B cell (primary cell): ENCODE measurements at regions of chr1 and their contacts with region 1.

Region 1: GRCh38 chr1:1858382-1859086 is 32.4 kb downstream of the GNB1 start:
- DNase-seq: peak; percentile 52
- ATAC-seq: no peak
- H3K4me3 ChIP-seq: no peak overlapping the region
- H3K4me3 Mint-ChIP-seq: peak overlapping the region; percentile 41
- H3K27ac ChIP-seq: peak overlapping the region; percentile 4 to 74
- H3K27ac Mint-ChIP-seq: peak overlapping the region; percentile 48
- H3K4me1 ChIP-seq: peaks cover 72 to 84% of the 10 kb centered on the region in 2 donors
- H3K4me1 Mint-ChIP-seq: peaks cover 79% of the 10 kb centered on the region
- H3K27me3 ChIP-seq: no peaks in the 10 kb centered on the region
- H3K27me3 Mint-ChIP-seq: no peaks in the 10 kb centered on the region
- CTCF ChIP-seq: no peak

Region 2: GRCh38 chr1:1796466-1796865 is 62.1 kb before region 1 on chr1:
- CTCF ChIA-PET with region 1: no interaction called
- POLR2A ChIA-PET with region 1: no interaction called
- intact Hi-C with region 1: no loop called
- DNase-seq: peak; percentile 40
- ATAC-seq: no peak
- H3K4me3 ChIP-seq: no peak overlapping the region
- H3K4me3 Mint-ChIP-seq: no peak overlapping the region
- H3K27ac ChIP-seq: peak overlapping the region in 1 of 2 donors; percentile 48
- H3K27ac Mint-ChIP-seq: peak overlapping the region; percentile 77
- H3K4me1 ChIP-seq: peaks cover 26 to 37% of the 10 kb centered on the region in 2 donors
- H3K4me1 Mint-ChIP-seq: peaks cover 44% of the 10 kb centered on the region
- H3K27me3 ChIP-seq: no peaks in the 10 kb centered on the region
- H3K27me3 Mint-ChIP-seq: no peaks in the 10 kb centered on the region
- CTCF ChIP-seq: peak; percentile 36

Region 3: DNA sequence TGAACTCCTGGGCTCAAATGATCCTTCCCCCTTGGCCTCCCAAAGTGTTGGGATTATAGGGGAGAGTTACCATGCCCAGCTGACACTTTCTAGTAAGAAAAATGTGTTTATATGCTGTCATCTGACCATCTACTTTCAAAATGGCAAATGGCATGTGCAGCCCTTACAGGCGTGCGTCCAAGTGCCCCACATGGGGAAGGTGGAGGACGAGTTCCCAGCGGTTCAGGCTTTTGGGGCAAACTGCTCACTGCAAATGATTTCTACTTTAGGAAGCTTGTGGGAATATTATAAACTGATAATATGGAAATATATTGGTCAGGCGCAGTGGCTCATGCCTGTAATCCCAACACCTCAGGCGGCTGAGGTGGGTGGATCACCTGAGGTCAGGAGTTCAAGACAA is 38.8 kb before region 1 on chr1:
- CTCF ChIA-PET with region 1: no interaction called
- POLR2A ChIA-PET with region 1: no interaction called
- intact Hi-C with region 1: loop called (anchors 5 kb)
- DNase-seq: no peak
- ATAC-seq: no peak
- H3K4me3 ChIP-seq: no peak overlapping the region
- H3K4me3 Mint-ChIP-seq: no peak overlapping the region
- H3K27ac ChIP-seq: no peak overlapping the region
- H3K27ac Mint-ChIP-seq: peak overlapping the region; percentile 15
- H3K4me1 ChIP-seq: peaks cover 0 to 3% of the 10 kb centered on the region in 2 donors
- H3K4me1 Mint-ChIP-seq: peaks cover 10% of the 10 kb centered on the region
- H3K27me3 ChIP-seq: no peaks in the 10 kb centered on the region
- H3K27me3 Mint-ChIP-seq: no peaks in the 10 kb centered on the region
- CTCF ChIP-seq: no peak

Region 4: DNA sequence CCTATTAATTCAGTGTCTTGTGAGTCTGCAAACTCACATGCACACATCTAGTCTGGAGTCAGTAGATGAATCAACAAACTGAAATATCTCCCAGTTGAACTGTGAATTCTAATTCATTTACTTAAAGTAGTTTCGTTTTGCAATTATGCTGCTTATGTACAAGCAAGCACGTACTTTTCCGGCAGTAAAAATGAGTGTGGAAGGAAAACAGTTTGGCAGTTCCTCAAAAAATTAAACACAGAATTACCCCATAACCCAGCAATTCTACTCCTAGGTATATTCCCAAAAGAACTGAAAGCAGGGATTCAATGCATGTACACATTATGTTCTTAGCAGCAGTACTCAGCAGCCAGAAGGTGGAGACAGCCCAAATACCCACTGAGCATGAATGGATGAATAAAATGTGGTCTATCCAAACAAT is 16.9 kb before region 1 on chr1:
- CTCF ChIA-PET with region 1: interaction called, 4 read pairs
- POLR2A ChIA-PET with region 1: no interaction called
- intact Hi-C with region 1: loop called (anchors 2 kb)
- DNase-seq: no peak
- ATAC-seq: no peak
- H3K4me3 ChIP-seq: peak overlapping the region in 1 of 5 experiments; percentile 8
- H3K4me3 Mint-ChIP-seq: peak overlapping the region; percentile 88
- H3K27ac ChIP-seq: peak overlapping the region in 1 of 2 donors; percentile 64
- H3K27ac Mint-ChIP-seq: peak overlapping the region; percentile 87
- H3K4me1 ChIP-seq: peaks cover 43 to 50% of the 10 kb centered on the region in 2 donors
- H3K4me1 Mint-ChIP-seq: peaks cover 61% of the 10 kb centered on the region
- H3K27me3 ChIP-seq: no peaks in the 10 kb centered on the region
- H3K27me3 Mint-ChIP-seq: no peaks in the 10 kb centered on the region
- CTCF ChIP-seq: no peak

Region 5: GRCh38 chr1:1959840-1960479 is 101.4 kb after region 1 on chr1:
- CTCF ChIA-PET with region 1: no interaction called
- POLR2A ChIA-PET with region 1: no interaction called
- intact Hi-C with region 1: no loop called
- DNase-seq: peak; percentile 47
- ATAC-seq: peak; percentile 24
- H3K4me3 ChIP-seq: no peak overlapping the region
- H3K4me3 Mint-ChIP-seq: no peak overlapping the region
- H3K27ac ChIP-seq: no peak overlapping the region
- H3K27ac Mint-ChIP-seq: no peak overlapping the region
- H3K4me1 ChIP-seq: no peaks in the 10 kb centered on the region
- H3K4me1 Mint-ChIP-seq: no peaks in the 10 kb centered on the region
- H3K27me3 ChIP-seq: peaks cover 0 to 33% (median 1%) of the 10 kb centered on the region in 4 experiments
- H3K27me3 Mint-ChIP-seq: peaks cover 32% of the 10 kb centered on the region
- CTCF ChIP-seq: peak; percentile 47

Region 6: GRCh38 chr1:2031546-2032540 is 173.3 kb after region 1 on chr1:
- CTCF ChIA-PET with region 1: no interaction called
- POLR2A ChIA-PET with region 1: no interaction called
- intact Hi-C with region 1: no loop called
- DNase-seq: no peak
- ATAC-seq: no peak
- H3K4me3 ChIP-seq: no peak overlapping the region
- H3K4me3 Mint-ChIP-seq: no peak overlapping the region
- H3K27ac ChIP-seq: no peak overlapping the region
- H3K27ac Mint-ChIP-seq: no peak overlapping the region
- H3K4me1 ChIP-seq: peaks cover 13 to 22% of the 10 kb centered on the region in 2 donors
- H3K4me1 Mint-ChIP-seq: peaks cover 7% of the 10 kb centered on the region
- H3K27me3 ChIP-seq: peaks cover 0 to 10% (median 0%) of the 10 kb centered on the region in 4 experiments
- H3K27me3 Mint-ChIP-seq: peaks cover 3% of the 10 kb centered on the region
- CTCF ChIP-seq: no peak